MCF 10A (cell line): ENCODE measurements at regions of chr6 and their contacts with region 1.

Region 1: GRCh38 chr6:30752157-30752927 is 8.0 kb upstream of the IER3 start:
- DNase-seq: peak; percentile 100
- H3K4me3 Mint-ChIP-seq: peak overlapping the region; percentile 54
- H3K27ac Mint-ChIP-seq: peak overlapping the region; percentile 94
- H3K4me1 Mint-ChIP-seq: peaks cover 49% of the 10 kb centered on the region
- H3K27me3 Mint-ChIP-seq: no peaks in the 10 kb centered on the region
- CTCF ChIP-seq: no peak

Region 2: GRCh38 chr6:30730601-30731435 is 21.5 kb before region 1 on chr6:
- CTCF ChIA-PET with region 1: interaction called, 10 read pairs
- POLR2A ChIA-PET with region 1: interaction called, 18 read pairs
- intact Hi-C with region 1: no loop called
- DNase-seq: peak; percentile 91
- H3K4me3 Mint-ChIP-seq: no peak overlapping the region
- H3K27ac Mint-ChIP-seq: no peak overlapping the region
- H3K4me1 Mint-ChIP-seq: peaks cover 7% of the 10 kb centered on the region
- H3K27me3 Mint-ChIP-seq: no peaks in the 10 kb centered on the region
- CTCF ChIP-seq: peak; percentile 86

Region 3: DNA sequence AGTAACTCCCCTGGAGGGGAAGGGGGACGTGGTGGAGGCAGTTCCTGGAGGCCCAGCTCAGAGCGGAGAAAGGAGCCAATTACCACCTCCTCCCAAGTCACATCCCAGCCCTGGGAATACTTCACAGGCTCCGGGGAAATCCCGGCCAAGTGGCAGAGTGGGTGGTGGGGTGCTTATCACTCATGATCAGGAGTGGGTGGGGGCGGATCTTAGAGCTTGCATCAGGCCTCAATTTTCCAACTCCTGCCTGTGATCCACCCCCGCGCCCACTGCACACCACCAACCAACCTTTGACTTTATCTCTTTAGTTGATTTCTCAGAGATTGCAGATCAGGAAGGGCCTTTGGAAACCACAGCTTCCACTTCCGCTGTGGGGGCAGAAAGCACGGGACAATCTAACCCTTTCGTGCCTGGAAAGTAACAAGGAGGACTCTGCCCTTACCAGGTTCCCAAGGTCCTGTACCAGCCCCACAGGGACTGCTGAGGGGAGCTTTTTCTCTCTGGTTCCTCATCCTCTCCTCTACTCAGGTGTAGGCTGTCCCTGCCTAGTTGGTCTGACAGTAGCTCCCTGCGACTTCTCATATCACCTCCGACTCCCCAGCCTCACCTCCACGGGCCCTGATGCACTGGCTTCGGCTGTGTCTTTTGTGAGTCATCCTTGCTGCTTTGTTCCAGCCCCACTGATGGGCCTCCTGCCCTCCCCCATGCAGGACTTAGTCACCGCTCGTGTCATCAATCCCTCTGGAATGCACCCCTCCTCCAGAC is 16.9 kb after region 1 on chr6:
- CTCF ChIA-PET with region 1: interaction called, 11 read pairs
- POLR2A ChIA-PET with region 1: interaction called, 58 read pairs
- intact Hi-C with region 1: loop called (anchors 1 kb)
- DNase-seq: peak; percentile 94
- H3K4me3 Mint-ChIP-seq: peak overlapping the region; percentile 48
- H3K27ac Mint-ChIP-seq: peak overlapping the region; percentile 76
- H3K4me1 Mint-ChIP-seq: peaks cover 36% of the 10 kb centered on the region
- H3K27me3 Mint-ChIP-seq: no peaks in the 10 kb centered on the region
- CTCF ChIP-seq: no peak

Region 4: DNA sequence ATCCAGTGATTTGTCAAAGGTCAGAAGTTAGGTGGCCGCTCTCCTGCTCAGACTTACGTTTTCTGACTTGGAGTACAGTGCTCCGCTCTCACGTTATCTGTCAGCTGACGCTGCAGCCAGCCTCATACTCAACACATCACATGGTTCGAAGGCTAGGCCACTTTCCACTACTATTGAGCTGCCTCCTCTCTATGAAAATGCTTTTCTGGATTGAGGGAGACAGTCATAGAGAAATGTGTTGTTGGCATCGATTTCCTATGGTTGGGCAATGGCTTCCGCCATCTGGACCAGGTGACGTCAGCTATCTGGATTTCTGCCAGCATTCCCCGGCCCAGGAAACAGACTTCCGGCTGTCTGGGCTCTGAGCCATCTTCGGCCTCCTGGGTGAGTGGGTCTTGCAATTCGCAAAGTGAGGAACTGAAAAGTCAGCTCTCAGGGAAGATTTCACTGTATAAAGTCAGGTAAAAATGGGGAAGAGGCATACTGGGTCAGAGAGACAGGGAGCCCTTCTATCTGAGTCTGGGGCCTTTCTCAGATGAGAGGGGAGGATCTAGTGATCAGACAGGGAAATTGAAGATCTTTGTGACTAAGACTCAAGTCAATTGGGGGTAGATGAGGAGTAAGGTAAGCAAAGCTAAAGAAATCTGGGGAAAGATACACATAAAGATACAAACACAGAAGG is 29.5 kb after region 1 on chr6:
- CTCF ChIA-PET with region 1: interaction called, 7 read pairs
- POLR2A ChIA-PET with region 1: interaction called, 90 read pairs
- intact Hi-C with region 1: loop called (anchors 1 kb)
- DNase-seq: peak; percentile 98
- H3K4me3 Mint-ChIP-seq: peak overlapping the region; percentile 42
- H3K27ac Mint-ChIP-seq: peak overlapping the region; percentile 91
- H3K4me1 Mint-ChIP-seq: peaks cover 57% of the 10 kb centered on the region
- H3K27me3 Mint-ChIP-seq: no peaks in the 10 kb centered on the region
- CTCF ChIP-seq: no peak

Region 5: DNA sequence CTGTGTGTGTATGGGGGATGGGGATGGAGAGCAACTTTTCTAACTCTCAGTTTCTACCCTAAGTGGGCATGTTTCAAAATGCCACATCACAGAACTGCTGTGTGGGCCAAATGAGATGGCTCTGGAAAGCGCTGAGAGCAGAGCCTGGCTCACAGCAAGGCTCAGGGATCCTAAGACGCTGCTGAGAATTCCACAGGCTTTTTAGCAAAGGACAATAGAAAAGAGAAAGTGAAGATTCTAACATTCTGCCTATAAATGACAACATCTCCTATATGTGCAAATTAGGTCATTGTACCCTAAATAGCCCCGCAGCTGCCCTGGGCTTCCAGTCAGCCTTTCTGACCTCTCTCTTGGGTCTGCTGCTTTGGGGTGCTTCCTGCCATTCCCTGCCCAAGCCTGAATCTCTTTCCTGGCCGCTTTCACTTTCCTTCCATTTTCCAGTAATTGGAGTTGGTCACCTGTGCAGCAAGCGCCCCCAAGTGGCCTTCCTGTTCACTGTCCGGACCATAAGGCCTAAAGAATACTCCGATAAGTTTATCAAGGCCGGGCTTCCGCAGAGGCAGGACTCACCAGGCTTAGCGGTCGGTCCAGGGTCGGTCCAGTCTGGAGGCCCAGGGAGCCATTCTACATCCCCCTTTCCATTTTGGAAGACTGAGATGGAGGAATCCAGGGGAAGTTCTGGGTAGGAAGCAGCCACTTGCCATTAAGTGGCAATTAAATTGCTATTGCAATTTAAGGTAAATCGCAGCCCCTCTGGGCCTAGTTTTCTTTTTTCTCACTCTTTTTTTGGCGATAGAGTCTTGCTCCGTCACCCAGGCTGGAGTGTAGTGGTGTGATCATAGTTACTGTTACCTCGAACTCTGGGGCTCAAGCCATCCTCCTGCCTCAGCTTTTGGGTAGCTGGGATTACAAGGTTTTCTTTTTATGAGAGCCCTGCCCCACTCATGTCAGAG is 125.4 kb after region 1 on chr6:
- CTCF ChIA-PET with region 1: interaction called, 6 read pairs
- POLR2A ChIA-PET with region 1: interaction called, 40 read pairs
- intact Hi-C with region 1: no loop called
- DNase-seq: peak; percentile 93
- H3K4me3 Mint-ChIP-seq: peak overlapping the region; percentile 61
- H3K27ac Mint-ChIP-seq: peak overlapping the region; percentile 95
- H3K4me1 Mint-ChIP-seq: peaks cover 40% of the 10 kb centered on the region
- H3K27me3 Mint-ChIP-seq: no peaks in the 10 kb centered on the region
- CTCF ChIP-seq: peak; percentile 90

Region 6: DNA sequence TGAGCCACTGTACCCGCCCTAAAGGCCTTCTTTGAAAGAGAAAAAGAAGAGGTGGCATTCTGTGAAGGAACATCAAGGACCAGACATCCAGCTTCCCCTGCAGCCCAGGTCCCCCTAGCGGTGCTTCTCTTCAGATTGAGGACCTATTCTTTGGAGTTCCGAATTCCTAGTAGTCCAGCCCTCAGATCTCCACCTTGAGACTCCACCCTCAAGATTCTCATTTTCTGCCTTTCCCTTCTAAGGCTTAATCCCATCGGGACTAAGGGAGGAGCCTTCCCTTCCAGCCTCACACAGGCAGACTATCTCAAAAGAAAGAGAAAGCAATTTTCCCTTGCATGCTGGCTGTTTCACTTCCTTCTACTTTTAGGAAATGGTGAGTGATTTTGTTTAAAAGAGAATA is 290.5 kb after region 1 on chr6:
- CTCF ChIA-PET with region 1: no interaction called
- POLR2A ChIA-PET with region 1: no interaction called
- intact Hi-C with region 1: no loop called
- DNase-seq: peak; percentile 66
- H3K4me3 Mint-ChIP-seq: no peak overlapping the region
- H3K27ac Mint-ChIP-seq: no peak overlapping the region
- H3K4me1 Mint-ChIP-seq: peaks cover 2% of the 10 kb centered on the region
- H3K27me3 Mint-ChIP-seq: no peaks in the 10 kb centered on the region
- CTCF ChIP-seq: peak; percentile 26